ENCODE measurements at regions of chr16 and their contacts with region 1.

Region 1: GRCh38 chr16:24189941-24190340 is 66.2 kb upstream of the CACNG3 start:
- DNase-seq: no peak
- H3K4me3 Mint-ChIP-seq: peak overlapping the region; percentile 5
- H3K27ac Mint-ChIP-seq: peak overlapping the region; percentile 71
- H3K4me1 Mint-ChIP-seq: peaks cover 14% of the 10 kb centered on the region
- H3K27me3 Mint-ChIP-seq: no peaks in the 10 kb centered on the region

Region 2: GRCh38 chr16:24151482-24151939 is 38.4 kb before region 1 on chr16:
- intact Hi-C with region 1: loop called (anchors 2 kb)
- DNase-seq: peak; percentile 67
- H3K4me3 Mint-ChIP-seq: no peak overlapping the region
- H3K27ac Mint-ChIP-seq: peak overlapping the region; percentile 84
- H3K4me1 Mint-ChIP-seq: peaks cover 26% of the 10 kb centered on the region
- H3K27me3 Mint-ChIP-seq: no peaks in the 10 kb centered on the region

Measured in activated CD4-positive, alpha-beta T cell treated with anti-CD3 and anti-CD28 coated beads, Interleukin-2, amount 10 ng/mL, durations not matched to agents 24 days and 14 days (primary cell).